HEK293 (cell line): ENCODE measurements at regions of chr19 and their contacts with region 1.

Region 1: DNA sequence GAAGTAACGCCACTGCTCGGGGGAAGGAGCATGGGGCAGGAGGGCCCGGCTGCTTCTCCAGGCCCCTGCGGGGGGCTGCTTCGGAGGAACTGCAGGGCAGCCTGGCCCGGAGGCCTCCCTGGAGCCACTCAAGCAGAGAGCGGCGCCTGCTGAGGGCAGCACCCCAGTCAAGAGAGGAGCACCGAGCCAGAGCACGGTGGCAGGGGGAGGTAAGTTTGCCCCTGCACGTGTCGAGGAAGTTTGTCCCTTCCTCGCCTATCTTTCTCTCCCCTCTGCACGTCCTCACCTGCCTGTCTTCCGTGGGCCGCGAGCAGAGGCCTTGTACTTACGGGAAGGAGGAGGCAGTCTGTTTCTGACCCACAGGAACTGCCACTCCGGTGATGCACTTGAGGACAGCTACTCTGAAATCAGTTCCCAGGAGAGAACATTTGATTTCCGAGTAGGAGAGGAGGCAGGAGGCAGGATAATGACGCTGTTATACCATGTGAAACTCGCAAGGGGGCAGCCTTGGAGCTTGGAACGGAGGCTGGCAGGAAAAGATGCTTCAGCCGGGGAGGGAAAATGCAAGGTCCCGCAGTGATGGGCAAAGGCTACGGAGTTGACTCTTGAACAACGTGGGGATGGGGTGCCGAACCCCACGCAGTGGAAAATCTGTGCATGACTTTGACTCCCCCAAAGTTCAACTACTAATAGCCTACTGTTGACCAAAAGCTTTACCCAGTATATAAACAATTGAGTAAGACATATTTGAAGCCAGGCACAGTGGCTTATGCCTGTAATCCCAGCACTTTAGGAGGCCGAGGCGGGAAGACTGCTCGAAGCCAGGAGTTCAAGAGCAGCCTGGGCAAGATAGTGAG is 5.0 kb downstream of the FFAR1 start:
- H3K4me3 ChIP-seq: no peak overlapping the region
- H3K27ac ChIP-seq: no peak overlapping the region
- H3K4me1 ChIP-seq: no peaks in the 10 kb centered on the region
- CTCF ChIP-seq: peak; percentile 95

Region 2: GRCh38 chr19:35247526-35248306 is 105.0 kb before region 1 on chr19:
- CTCF ChIA-PET with region 1: no interaction called
- POLR2A ChIA-PET with region 1: no interaction called
- H3K4me3 ChIP-seq: peak overlapping the region; percentile 63
- H3K27ac ChIP-seq: peak overlapping the region; percentile 98
- H3K4me1 ChIP-seq: peaks cover 9% of the 10 kb centered on the region
- CTCF ChIP-seq: peak; percentile 95

Region 3: GRCh38 chr19:35300339-35300649 is 52.4 kb before region 1 on chr19:
- CTCF ChIA-PET with region 1: no interaction called
- POLR2A ChIA-PET with region 1: no interaction called
- H3K4me3 ChIP-seq: no peak overlapping the region
- H3K27ac ChIP-seq: no peak overlapping the region
- H3K4me1 ChIP-seq: no peaks in the 10 kb centered on the region
- CTCF ChIP-seq: no peak

Region 4: DNA sequence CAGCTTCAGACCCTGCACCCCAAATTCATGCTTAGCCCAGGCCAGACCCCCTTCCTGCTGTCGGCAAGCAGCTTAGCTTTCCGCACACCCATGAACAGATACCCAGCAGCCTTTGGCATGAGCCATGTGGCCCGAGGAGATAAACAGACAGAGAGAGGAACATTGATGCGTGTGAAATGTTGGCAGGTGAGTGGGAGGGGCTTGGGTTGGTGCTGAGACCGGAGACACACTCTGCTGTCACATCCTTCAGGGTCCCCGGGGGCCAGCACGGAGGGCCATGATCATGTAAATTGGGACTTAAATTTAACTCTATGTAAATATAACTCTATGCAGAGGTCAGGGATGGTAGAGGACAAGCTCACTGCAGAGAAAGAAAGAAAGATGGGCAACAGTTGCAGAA is 22.2 kb before region 1 on chr19:
- CTCF ChIA-PET with region 1: interaction called, 40 read pairs
- POLR2A ChIA-PET with region 1: no interaction called
- H3K4me3 ChIP-seq: no peak overlapping the region
- H3K27ac ChIP-seq: no peak overlapping the region
- H3K4me1 ChIP-seq: no peaks in the 10 kb centered on the region
- CTCF ChIP-seq: no peak

Region 5: DNA sequence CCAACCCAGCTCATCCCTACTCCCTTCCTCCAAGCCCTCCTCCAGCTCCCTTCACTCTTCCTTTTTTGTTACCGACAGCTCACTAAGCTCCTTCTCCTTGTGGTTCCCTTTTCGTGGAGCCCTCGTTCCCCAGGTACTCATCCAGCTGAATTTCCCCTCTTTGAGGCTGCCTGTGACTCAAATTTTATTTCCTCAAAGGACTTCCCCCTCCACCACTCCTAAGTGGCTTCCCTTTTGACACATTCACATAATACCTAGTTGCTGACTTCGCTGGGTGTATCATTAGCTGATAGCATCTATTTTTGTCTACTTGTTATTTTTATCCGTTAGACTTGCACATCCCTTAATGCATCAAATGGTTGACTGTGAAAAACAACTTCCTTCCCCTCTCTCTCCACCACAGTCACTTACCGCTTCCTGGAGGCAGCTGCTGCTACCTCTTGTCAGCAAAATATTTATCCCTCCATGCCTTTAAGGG is 109.8 kb after region 1 on chr19:
- CTCF ChIA-PET with region 1: interaction called, 157 read pairs
- POLR2A ChIA-PET with region 1: no interaction called
- H3K4me3 ChIP-seq: no peak overlapping the region
- H3K27ac ChIP-seq: no peak overlapping the region
- H3K4me1 ChIP-seq: no peaks in the 10 kb centered on the region
- CTCF ChIP-seq: no peak

Region 6: DNA sequence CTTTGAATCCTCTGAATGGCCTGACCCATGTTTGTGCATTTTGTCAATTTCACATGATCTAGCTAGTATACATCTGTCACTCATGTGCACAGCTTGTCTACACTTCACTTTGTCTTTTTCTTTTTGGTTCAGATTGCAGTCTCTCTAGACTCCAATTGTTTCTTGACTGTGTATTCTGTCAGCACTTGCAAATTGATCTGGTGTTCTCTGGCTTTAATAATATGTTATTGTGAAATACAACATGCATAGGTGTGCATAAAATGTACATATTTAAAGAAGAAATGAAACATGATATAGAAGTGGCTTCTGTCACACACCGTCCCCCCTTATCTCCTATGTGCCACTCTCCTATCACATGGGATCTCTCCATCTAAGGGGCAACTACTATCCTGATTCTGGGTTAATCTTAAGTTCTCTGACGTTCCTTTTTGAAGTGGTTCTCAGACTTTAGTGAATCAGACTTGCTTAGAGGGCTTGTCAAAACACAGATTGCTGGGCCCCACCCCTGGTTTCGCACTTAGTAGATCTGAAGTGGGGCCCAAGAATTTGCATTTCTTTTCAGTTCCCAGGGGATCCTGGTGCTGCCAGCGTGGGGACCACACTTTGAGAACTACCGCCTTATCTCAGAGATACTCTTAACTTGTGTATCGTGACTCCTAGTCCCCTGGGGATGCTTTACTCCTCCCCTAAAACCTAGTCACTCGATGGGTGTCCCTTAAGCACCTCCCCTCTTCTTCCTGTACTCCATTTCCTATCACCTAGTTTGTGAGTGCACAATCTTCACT is 131.8 kb after region 1 on chr19:
- CTCF ChIA-PET with region 1: interaction called, 34 read pairs
- POLR2A ChIA-PET with region 1: no interaction called
- H3K4me3 ChIP-seq: no peak overlapping the region
- H3K27ac ChIP-seq: no peak overlapping the region
- H3K4me1 ChIP-seq: peaks cover 8% of the 10 kb centered on the region
- CTCF ChIP-seq: no peak

Region 7: GRCh38 chr19:35518313-35518712 is 165.6 kb after region 1 on chr19:
- CTCF ChIA-PET with region 1: interaction called, 13 read pairs
- POLR2A ChIA-PET with region 1: no interaction called
- H3K4me3 ChIP-seq: no peak overlapping the region
- H3K27ac ChIP-seq: no peak overlapping the region
- H3K4me1 ChIP-seq: 0 out of 2 replicates have a peak, but pooled peaks cover 3% of the 10 kb centered on the region
- CTCF ChIP-seq: no peak